GM18951 (cell line): ENCODE measurements at regions of chr5 and their contacts with region 1.

Region 1: GRCh38 chr5:175444060-175444904 is at the start of gene DRD1:
- POLR2A ChIP-seq: no peak

Region 2: DNA sequence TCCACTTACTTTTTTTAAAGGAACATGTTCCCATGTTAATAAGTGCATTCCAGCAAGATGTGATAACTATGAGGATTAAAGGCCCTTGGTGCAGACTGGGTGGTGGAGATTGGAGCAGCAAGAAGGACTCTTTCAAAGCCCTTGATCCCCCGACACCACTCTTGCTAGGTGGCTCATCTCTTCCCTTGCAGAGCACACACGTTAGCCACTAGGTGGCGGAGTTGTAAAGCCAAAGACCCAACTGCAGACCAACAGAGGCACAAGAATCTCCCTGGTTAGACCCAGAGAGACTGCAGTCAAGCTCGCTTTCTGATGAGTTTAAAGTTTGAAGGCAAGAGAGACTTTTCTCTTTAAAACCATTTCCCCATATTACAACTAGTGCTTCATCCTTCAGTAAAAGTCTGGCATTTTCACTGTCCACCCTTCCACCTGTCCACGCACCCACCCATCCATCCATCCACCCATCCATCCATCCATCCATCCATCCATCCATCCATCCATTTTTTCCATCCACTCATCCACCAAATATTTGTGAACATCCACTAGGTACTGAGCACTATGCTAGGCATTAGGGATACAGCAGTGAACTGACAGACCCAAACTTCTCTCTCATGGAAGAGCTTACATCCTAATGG is 493.0 kb before region 1 on chr5:
- in situ Hi-C with region 1: loop called (anchors 25 kb)
- POLR2A ChIP-seq: no peak